Head of caudate nucleus (tissue), 42 donors: ENCODE measurements at regions of chr11 and their contacts with region 1.

Region 1: GRCh38 chr11:36672813-36673450 is 74.9 kb upstream of the RAG2 start:
- DNase-seq: peak in 11 of 42 donors; percentile 25 to 63 (median 40)

Region 2: GRCh38 chr11:36441610-36442208 is 231.2 kb before region 1 on chr11:
- intact Hi-C with region 1: no loop called
- DNase-seq: no peak

Region 3: DNA sequence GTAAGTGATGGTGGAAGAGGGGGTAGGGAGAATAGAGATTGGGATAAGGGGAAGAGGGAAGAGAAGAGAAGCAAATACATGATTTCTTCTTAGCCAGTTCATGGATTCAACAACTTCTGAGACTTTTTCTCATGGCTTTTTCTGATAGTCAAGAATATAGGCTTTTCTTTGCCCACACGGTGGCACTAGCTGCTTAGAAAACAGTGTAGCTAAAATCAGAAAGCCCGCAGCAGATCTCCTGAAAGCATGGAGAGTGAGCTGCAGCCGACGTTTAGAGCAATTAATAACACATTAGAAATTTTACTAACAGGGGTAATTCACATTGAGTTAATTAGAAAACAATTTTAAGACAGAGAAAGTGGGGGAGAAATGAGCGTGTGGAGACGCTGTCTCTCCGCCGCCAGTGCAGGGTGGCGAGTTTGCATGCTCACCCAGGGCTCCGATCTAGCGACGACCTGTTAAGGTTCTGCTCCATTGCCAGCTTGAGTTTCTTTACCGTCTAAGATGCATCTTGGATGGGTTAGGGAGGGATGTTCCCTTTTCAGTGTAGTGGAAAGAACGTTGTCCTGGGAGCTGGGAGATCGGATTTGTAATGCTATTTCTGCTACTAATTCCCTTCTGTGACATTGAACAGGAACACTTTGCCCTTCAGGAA is 108.4 kb before region 1 on chr11:
- intact Hi-C with region 1: loop called (anchors 5 kb)
- DNase-seq: peak in 41 of 42 donors; percentile 6 to 84 (median 63)